GM12878 (cell line): ENCODE measurements at regions of chr19 and their contacts with region 1.

Region 1: GRCh38 chr19:52527134-52527955 is at the start of gene ZNF808:
- DNase-seq: peak; percentile 68
- ATAC-seq: peak; percentile 95
- H3K4me3 ChIP-seq: peak within 1 kb of the TSS; percentile 79
- H3K27ac ChIP-seq: peak within 1 kb of the TSS; percentile 92
- H3K4me1 ChIP-seq: no peaks in the 10 kb centered on the region; the same call in 1 of the 2 replicates
- H3K27me3 ChIP-seq: no peaks in the 10 kb centered on the region
- CTCF ChIP-seq: peak; percentile 57 to 77 (median 59)
- EP300 ChIP-seq: no peak
- POLR2A ChIP-seq: peak; percentile 74
- RAD21 ChIP-seq: peak; percentile 63
- polyA plus RNA-seq, gene ZNF808: 2.1 to 3.7 TPM

Region 2: GRCh38 chr19:52492597-52493470 is 34.5 kb before region 1 on chr19:
- CTCF ChIA-PET with region 1: no interaction called
- POLR2A ChIA-PET with region 1: no interaction called
- RAD21 ChIA-PET with region 1: no interaction called
- SMC1A ChIA-PET with region 1: no interaction called
- in situ Hi-C with region 1: no loop called
- intact Hi-C with region 1: no loop called
- DNase-seq: no peak
- ATAC-seq: no peak
- H3K4me3 ChIP-seq: no peak overlapping the region
- H3K27ac ChIP-seq: no peak overlapping the region
- H3K4me1 ChIP-seq: no peaks in the 10 kb centered on the region
- H3K27me3 ChIP-seq: no peaks in the 10 kb centered on the region
- CTCF ChIP-seq: no peak; a peak in 1 of 6 replicates
- EP300 ChIP-seq: no peak
- POLR2A ChIP-seq: no peak
- RAD21 ChIP-seq: no peak

Region 3: DNA sequence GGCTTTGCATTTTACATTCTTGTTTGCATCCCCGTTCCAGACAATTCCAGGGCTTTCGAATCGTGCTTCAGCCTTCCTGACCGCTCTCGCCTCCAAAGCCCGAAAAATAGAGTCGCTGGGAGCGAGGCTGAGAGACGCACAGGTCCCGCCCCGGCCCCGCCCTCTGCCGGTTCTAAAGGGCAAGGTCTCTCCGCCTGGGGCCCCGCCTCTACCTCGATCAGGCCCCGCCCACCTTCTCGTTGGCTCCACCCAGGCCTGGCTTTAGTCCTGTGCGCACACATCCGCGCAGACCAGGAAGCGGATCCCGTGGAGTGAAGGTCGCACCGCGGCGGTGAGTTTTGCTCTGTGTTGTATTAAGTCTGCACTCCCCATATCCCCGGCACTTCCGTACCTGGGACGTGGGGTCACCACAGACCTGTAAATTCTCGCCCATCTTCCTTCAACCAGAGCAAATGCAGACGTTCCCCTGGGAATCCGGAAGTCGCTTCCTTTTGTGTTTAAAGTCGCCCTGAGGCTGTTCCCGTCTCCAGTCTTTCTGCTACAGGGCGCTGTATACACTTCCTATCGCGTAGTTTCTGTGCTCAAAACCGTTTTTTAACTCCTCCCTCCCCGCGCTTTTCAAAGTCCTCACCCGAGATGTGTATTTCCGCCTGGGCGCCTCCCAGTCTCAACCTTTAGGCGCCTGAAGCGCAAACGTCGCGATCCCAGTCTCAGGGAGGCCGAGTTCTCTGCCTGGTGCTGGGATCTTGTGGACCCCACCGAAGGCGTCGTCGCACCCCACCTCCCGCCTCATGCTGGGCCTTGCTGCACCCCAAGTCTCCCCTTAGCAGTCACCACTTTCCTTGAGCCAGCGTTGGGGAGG is 42.9 kb after region 1 on chr19 and contains the start of gene ZNF701:
- CTCF ChIA-PET with region 1: no interaction called
- POLR2A ChIA-PET with region 1: no interaction called
- RAD21 ChIA-PET with region 1: no interaction called
- SMC1A ChIA-PET with region 1: no interaction called
- in situ Hi-C with region 1: no loop called
- intact Hi-C with region 1: loop called (anchors 5 kb)
- DNase-seq: peak; percentile 72
- ATAC-seq: peak; percentile 99
- H3K4me3 ChIP-seq: peak within 1 kb of the TSS; percentile 88
- H3K27ac ChIP-seq: peak within 1 kb of the TSS; percentile 86
- H3K4me1 ChIP-seq: no peaks in the 10 kb centered on the region
- H3K27me3 ChIP-seq: no peaks in the 10 kb centered on the region
- CTCF ChIP-seq: peak in 1 of 3 experiments; percentile 11; a peak in 1 of 6 replicates
- EP300 ChIP-seq: no peak
- POLR2A ChIP-seq: peak; percentile 93
- RAD21 ChIP-seq: no peak
- polyA plus RNA-seq, gene ZNF701: 3.1 to 3.7 TPM

Region 4: GRCh38 chr19:52748336-52748950 is 221.1 kb after region 1 on chr19:
- CTCF ChIA-PET with region 1: no interaction called
- POLR2A ChIA-PET with region 1: no interaction called
- RAD21 ChIA-PET with region 1: no interaction called
- SMC1A ChIA-PET with region 1: interaction called, 3 read pairs
- in situ Hi-C with region 1: no loop called
- intact Hi-C with region 1: loop called (anchors 2 kb)
- DNase-seq: peak; percentile 4
- ATAC-seq: 0 out of 3 replicates have a peak, but pooled peaks have one; percentile 37
- H3K4me3 ChIP-seq: no peak overlapping the region
- H3K27ac ChIP-seq: no peak overlapping the region
- H3K4me1 ChIP-seq: no peaks in the 10 kb centered on the region
- H3K27me3 ChIP-seq: no peaks in the 10 kb centered on the region
- CTCF ChIP-seq: peak; percentile 23 to 48 (median 26); a peak in 4 of 6 replicates
- EP300 ChIP-seq: no peak
- POLR2A ChIP-seq: no peak
- RAD21 ChIP-seq: peak; percentile 74